ENCODE measurements at regions of chr6 and their contacts with region 1.

Region 1: GRCh38 chr6:168274037-168274952 is 45.3 kb downstream of the DACT2 start:
- DNase-seq: peak; percentile 83 to 87
- H3K4me3 ChIP-seq: peak overlapping the region; percentile 27
- H3K4me3 Mint-ChIP-seq: peak overlapping the region; percentile 73
- H3K27ac Mint-ChIP-seq: peak overlapping the region; percentile 65
- H3K4me1 ChIP-seq: peaks cover 39% of the 10 kb centered on the region
- H3K4me1 Mint-ChIP-seq: peaks cover 41% of the 10 kb centered on the region
- H3K27me3 ChIP-seq: no peaks in the 10 kb centered on the region
- H3K27me3 Mint-ChIP-seq: no peaks in the 10 kb centered on the region
- CTCF ChIP-seq: no peak

Region 2: DNA sequence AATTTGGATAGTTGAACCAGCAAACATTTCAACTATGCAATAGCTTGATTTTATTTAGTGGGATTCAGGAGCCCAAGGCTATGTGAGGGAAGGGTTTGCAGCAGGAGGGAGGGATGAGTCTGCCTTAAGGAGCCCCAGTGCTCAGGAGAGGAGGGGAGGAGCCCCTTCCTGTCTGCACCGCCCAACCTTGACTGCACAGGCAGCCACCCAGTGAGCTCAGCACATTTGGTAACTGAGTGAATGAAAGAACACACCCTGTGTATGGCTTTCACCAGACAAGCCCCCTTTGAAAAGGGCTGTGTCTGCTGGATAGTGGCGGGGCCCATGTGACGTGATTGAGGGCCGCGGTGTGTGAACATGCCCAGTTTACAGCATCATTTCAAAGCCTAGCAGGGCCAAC is 28.2 kb after region 1 on chr6:
- CTCF ChIA-PET with region 1: interaction called, 4 read pairs
- POLR2A ChIA-PET with region 1: interaction called, 4 read pairs
- intact Hi-C with region 1: loop called (anchors 1 kb)
- DNase-seq: no peak
- H3K4me3 ChIP-seq: no peak overlapping the region
- H3K4me3 Mint-ChIP-seq: peak overlapping the region; percentile 65
- H3K27ac Mint-ChIP-seq: no peak overlapping the region
- H3K4me1 ChIP-seq: peaks cover 24% of the 10 kb centered on the region
- H3K4me1 Mint-ChIP-seq: peaks cover 12% of the 10 kb centered on the region
- H3K27me3 ChIP-seq: no peaks in the 10 kb centered on the region
- H3K27me3 Mint-ChIP-seq: no peaks in the 10 kb centered on the region
- CTCF ChIP-seq: no peak

Region 3: GRCh38 chr6:168319274-168320111 is 45.2 kb after region 1 on chr6 and contains the start of gene DACT2:
- CTCF ChIA-PET with region 1: interaction called, 3 read pairs
- POLR2A ChIA-PET with region 1: no interaction called
- intact Hi-C with region 1: loop called (anchors 1 kb)
- DNase-seq: peak; percentile 59 to 76
- H3K4me3 ChIP-seq: peak within 1 kb of the TSS; percentile 42
- H3K4me3 Mint-ChIP-seq: peak within 1 kb of the TSS; percentile 80
- H3K27ac Mint-ChIP-seq: peak within 1 kb of the TSS; percentile 48
- H3K4me1 ChIP-seq: peaks cover 40% of the 10 kb centered on the region
- H3K4me1 Mint-ChIP-seq: peaks cover 16% of the 10 kb centered on the region
- H3K27me3 ChIP-seq: no peaks in the 10 kb centered on the region
- H3K27me3 Mint-ChIP-seq: no peaks in the 10 kb centered on the region
- CTCF ChIP-seq: no peak
- total RNA-seq, gene DACT2: 18.6 and 21.1 TPM in 2 replicates

Region 4: GRCh38 chr6:168390749-168391572 is 116.7 kb after region 1 on chr6:
- CTCF ChIA-PET with region 1: no interaction called
- POLR2A ChIA-PET with region 1: no interaction called
- intact Hi-C with region 1: no loop called
- DNase-seq: no peak
- H3K4me3 ChIP-seq: no peak overlapping the region
- H3K4me3 Mint-ChIP-seq: no peak overlapping the region
- H3K27ac Mint-ChIP-seq: no peak overlapping the region
- H3K4me1 ChIP-seq: peaks cover 5% of the 10 kb centered on the region; the same call in 1 of the 2 replicates
- H3K4me1 Mint-ChIP-seq: no peaks in the 10 kb centered on the region
- H3K27me3 ChIP-seq: no peaks in the 10 kb centered on the region
- H3K27me3 Mint-ChIP-seq: no peaks in the 10 kb centered on the region
- CTCF ChIP-seq: no peak

Region 5: DNA sequence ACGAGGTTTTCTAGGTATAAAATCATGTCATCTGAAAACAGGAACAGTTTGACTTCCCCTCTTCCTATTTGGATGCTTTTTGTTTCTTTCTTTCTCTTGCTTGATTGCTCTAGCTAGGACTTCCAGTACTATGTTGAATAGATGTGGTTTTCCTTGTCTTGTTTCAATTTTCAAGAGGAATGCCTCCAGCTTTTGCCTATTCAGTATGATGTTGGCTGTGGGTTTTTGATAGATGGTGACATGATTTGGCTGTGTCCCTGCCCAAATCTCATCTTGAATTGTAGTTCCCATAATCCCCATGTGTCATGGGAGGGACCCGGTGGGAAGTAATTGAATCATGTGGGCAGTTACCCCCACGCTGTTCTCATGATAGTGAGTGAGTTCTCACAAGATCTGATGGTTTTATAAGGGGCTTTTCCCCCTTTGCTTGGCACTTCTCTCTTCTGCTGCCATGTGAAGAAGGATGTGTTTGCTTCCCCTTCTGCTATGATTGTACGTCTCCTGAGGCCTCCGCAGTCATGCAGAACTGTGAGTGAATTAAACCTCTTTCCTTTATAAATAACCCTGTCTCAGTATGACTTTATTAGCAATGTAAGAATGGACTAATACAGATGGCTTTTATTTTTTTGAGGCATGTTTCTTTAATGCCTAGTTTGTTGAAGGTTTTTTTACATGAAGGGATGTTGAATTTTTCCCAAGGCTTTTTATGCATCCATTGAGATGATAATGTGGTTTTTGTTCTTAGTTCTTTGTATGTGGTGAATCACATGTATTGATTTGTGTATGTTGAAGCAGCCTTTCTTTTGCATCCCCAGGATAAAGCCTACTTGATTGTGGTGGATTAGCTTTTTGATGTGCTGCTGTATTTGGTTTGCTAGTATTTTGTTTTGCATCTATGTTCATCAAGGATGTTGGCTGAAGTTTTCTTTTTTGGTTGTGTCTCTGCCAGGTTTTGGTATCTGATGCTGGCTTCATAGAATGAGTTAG is 740.2 kb after region 1 on chr6:
- CTCF ChIA-PET with region 1: no interaction called
- POLR2A ChIA-PET with region 1: no interaction called
- intact Hi-C with region 1: no loop called
- DNase-seq: no peak
- H3K4me3 ChIP-seq: no peak overlapping the region
- H3K4me3 Mint-ChIP-seq: no peak overlapping the region
- H3K27ac Mint-ChIP-seq: no peak overlapping the region
- H3K4me1 ChIP-seq: no peaks in the 10 kb centered on the region
- H3K4me1 Mint-ChIP-seq: no peaks in the 10 kb centered on the region
- H3K27me3 ChIP-seq: no peaks in the 10 kb centered on the region
- H3K27me3 Mint-ChIP-seq: peaks cover 6% of the 10 kb centered on the region
- CTCF ChIP-seq: no peak